Transverse colon (tissue), 4 donors: ENCODE measurements at regions of chr9 and their contacts with region 1.

Region 1: GRCh38 chr9:121222524-121223171 is 21.0 kb upstream of the RAB14 start:
- DNase-seq: no peak
- H3K4me3 ChIP-seq: no peak overlapping the region
- H3K27ac ChIP-seq: no peak overlapping the region
- H3K4me1 ChIP-seq: no peaks in the 10 kb centered on the region
- H3K27me3 ChIP-seq: no peaks in the 10 kb centered on the region
- CTCF ChIP-seq: peak; percentile 61 to 81 (median 66)
- EP300 ChIP-seq: no peak
- POLR2A ChIP-seq: no peak

Region 2: DNA sequence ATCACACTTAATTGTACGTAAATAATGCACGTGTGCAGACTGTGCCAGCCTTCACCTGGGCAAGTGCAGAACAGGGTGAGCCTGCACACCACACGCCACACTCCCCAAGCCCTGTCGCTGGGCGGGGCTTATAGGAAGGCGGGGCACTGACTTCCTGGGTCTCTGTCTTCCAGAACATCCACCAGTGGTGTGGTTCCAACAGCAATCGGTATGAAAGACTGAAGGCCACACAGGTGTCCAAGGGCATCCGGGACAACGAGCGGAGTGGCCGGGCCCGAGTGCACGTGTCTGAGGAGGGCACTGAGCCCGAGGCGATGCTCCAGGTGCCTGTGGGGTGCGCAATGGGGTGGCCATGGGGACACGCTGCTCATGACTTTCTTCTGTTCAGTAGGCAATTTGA is 89.5 kb after region 1 on chr9:
- in situ Hi-C with region 1: loop called in 3 of 4 experiments (anchors 10 to 25 kb)
- intact Hi-C with region 1: loop called (anchors 5 kb)
- DNase-seq: no peak
- H3K4me3 ChIP-seq: no peak overlapping the region
- H3K27ac ChIP-seq: no peak overlapping the region
- H3K4me1 ChIP-seq: peaks cover 0 to 7% (median 0%) of the 10 kb centered on the region in 4 donors
- H3K27me3 ChIP-seq: no peaks in the 10 kb centered on the region
- CTCF ChIP-seq: no peak
- EP300 ChIP-seq: no peak
- POLR2A ChIP-seq: no peak